Psoas muscle (tissue), 8 donors: ENCODE measurements at regions of chr7 and their contacts with region 1.

Region 1: DNA sequence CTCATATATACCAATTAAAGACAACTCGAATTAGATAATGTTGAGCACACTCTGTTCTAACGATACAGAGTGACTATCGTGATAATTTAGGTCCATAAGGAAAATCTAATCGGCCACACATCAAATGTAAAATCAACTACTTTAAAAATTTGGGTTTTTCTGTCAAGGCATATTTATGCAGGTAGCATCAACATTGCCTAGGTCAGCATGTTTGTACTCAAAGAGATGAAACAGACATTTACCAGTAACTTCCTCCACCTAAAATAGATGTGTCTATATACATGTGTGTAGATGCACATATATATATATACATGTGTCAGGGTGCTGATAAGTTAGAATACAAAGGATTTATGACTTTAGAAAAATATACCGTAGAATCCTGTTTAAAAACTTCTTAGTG is 22.0 kb downstream of the PSMC2 start:
- DNase-seq: no peak
- ATAC-seq: no peak
- H3K4me3 ChIP-seq: no peak overlapping the region
- H3K27ac ChIP-seq: no peak overlapping the region
- H3K4me1 ChIP-seq: no peaks in the 10 kb centered on the region
- H3K27me3 ChIP-seq: no peaks in the 10 kb centered on the region
- CTCF ChIP-seq: no peak

Region 2: DNA sequence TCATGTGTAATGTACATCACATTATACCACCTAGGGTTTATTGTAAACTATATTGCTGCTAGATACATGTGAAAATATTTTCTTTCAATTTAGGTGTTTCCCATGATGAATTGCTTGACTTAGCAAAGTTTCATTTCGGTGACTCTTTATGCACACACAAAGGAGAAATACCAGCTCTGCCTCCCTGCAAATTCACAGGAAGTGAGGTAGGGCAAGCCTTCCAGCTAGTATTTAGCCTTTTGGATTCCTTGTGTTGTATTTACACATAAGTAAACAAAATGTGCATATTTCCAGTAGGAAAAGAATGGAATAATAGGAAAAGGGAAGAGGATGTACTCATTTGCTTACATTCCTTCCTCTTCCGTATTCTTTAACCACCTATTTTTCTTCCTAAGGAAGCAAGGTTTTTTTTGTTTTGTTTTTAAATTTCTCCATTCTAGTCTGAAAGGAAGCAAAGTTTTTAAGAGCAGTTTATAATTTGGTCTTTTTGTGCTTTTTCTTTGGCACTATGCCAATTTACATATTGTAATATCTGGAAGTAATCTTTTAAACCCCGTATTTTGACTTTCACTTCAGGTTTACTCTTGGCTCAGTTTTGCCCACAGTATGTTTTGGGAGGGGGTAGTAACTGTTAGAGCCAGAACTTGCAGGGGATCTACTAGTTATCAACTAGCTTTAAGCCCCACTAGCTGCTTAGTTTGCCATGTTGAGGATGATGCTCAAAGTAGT is 61.8 kb before region 1 on chr7:
- intact Hi-C with region 1: loop called (anchors 5 kb)
- DNase-seq: no peak
- ATAC-seq: no peak
- H3K4me3 ChIP-seq: no peak overlapping the region
- H3K27ac ChIP-seq: no peak overlapping the region
- H3K4me1 ChIP-seq: no peaks in the 10 kb centered on the region
- H3K27me3 ChIP-seq: no peaks in the 10 kb centered on the region
- CTCF ChIP-seq: no peak

Region 3: GRCh38 chr7:103314852-103315251 is 54.6 kb before region 1 on chr7:
- intact Hi-C with region 1: loop called in 1 of 2 experiments (anchors 5 kb)
- DNase-seq: no peak
- ATAC-seq: no peak
- H3K4me3 ChIP-seq: no peak overlapping the region
- H3K27ac ChIP-seq: no peak overlapping the region
- H3K4me1 ChIP-seq: no peaks in the 10 kb centered on the region
- H3K27me3 ChIP-seq: no peaks in the 10 kb centered on the region
- CTCF ChIP-seq: no peak

Region 4: DNA sequence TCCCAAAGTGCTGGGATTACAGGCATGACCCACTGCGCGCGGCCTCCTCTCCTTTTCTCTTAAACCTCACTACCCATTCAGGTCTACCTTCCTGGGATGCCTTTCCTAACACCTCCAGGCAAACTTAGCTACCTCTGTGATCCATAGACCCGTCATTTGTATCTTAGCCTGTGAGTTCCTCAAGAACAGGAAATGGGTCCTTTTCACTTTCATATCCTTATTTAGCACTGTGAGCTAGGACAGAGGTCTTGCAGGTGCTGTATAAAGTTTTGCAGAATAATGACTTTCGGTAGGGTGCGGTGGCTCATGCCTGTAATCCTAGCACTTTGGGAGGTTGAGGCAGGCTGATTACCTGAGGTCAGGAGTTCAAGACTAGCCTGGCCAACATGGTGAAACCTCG is 404.3 kb after region 1 on chr7:
- intact Hi-C with region 1: no loop called
- DNase-seq: no peak
- ATAC-seq: no peak
- H3K4me3 ChIP-seq: no peak overlapping the region
- H3K27ac ChIP-seq: no peak overlapping the region
- H3K4me1 ChIP-seq: no peaks in the 10 kb centered on the region
- H3K27me3 ChIP-seq: no peaks in the 10 kb centered on the region
- CTCF ChIP-seq: no peak